Astrocyte of the cerebellum (primary cell): ENCODE measurements at regions of chr6 and their contacts with region 1.

Region 1: GRCh38 chr6:156809034-156809433 is 31.9 kb downstream of the ARID1B start:
- DNase-seq: no peak
- H3K4me3 ChIP-seq: no peak overlapping the region
- CTCF ChIP-seq: no peak

Region 2: DNA sequence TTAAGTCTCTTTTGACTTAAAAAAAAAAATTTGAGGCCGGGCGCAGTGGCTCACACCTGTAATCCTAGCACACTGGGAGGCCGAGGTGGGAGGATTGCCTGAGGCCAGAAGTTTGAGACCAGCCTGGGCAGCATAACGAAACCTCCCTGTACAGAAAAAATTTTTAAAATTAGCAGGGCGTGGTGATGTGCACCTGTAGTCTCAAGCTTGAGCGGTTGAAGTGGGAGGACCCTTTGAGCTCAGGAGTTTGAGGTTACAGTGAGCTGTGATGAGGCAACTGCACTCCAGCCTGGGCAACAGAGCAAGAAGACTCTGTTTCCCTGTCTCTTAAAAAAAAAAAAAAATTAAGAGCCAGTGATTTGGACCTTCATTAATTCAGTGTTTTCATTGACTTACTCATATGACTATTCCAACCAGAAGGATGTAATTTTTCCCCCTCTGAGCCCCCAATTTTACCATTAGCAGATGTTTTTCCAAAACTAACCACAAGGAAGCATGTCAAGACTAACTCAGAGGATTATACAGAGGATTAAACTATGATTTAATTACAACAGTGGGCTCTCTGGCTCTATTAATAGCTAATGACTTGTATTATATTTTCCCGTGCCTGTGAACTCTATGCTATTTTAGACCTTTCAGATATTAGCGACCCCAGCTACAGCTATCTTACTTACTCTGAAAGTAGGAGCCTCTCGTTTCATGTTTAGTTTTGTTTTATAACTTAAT is 43.3 kb after region 1 on chr6:
- in situ Hi-C with region 1: loop called (anchors 5 kb)
- DNase-seq: no peak
- H3K4me3 ChIP-seq: no peak overlapping the region
- CTCF ChIP-seq: no peak

Region 3: GRCh38 chr6:157068691-157069324 is 259.8 kb after region 1 on chr6:
- in situ Hi-C with region 1: no loop called
- DNase-seq: no peak
- H3K4me3 ChIP-seq: no peak overlapping the region
- CTCF ChIP-seq: no peak